ENCODE measurements at regions of chr6 and their contacts with region 1.

Region 1: DNA sequence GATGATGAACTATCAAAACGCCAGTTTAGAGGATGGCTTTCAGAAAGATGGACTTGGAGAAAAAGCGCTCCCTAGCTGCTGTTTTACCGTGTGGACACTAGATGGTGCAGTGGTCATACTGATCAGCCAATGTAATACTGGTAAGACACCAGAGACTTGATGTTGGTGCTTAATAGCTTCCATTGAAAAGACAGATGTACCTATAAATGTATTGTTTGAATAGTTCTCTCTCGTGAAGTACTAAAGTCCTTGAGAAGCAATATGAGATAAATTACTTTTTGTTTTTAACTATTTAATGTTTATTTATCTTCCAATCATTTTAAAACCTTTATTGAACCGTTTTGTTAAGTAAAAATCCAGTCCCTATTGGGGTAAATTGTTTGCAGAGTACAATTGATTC is 63.9 kb upstream of the FUCA2 start:
- DNase-seq: peak; percentile 61
- H3K4me3 ChIP-seq: no peak overlapping the region
- H3K27ac ChIP-seq: no peak overlapping the region
- H3K27me3 ChIP-seq: no peaks in the 10 kb centered on the region
- CTCF ChIP-seq: peak; percentile 91

Region 2: GRCh38 chr6:143647191-143647590 is 71.8 kb after region 1 on chr6:
- CTCF ChIA-PET with region 1: no interaction called
- POLR2A ChIA-PET with region 1: no interaction called
- DNase-seq: no peak
- H3K4me3 ChIP-seq: no peak overlapping the region
- H3K27ac ChIP-seq: no peak overlapping the region
- H3K27me3 ChIP-seq: no peaks in the 10 kb centered on the region
- CTCF ChIP-seq: no peak

Region 3: GRCh38 chr6:143806282-143807102 is 231.1 kb after region 1 on chr6:
- CTCF ChIA-PET with region 1: interaction called, 13 read pairs
- POLR2A ChIA-PET with region 1: no interaction called
- DNase-seq: peak; percentile 23
- H3K4me3 ChIP-seq: no peak overlapping the region
- H3K27ac ChIP-seq: no peak overlapping the region
- H3K27me3 ChIP-seq: no peaks in the 10 kb centered on the region
- CTCF ChIP-seq: no peak

Region 4: DNA sequence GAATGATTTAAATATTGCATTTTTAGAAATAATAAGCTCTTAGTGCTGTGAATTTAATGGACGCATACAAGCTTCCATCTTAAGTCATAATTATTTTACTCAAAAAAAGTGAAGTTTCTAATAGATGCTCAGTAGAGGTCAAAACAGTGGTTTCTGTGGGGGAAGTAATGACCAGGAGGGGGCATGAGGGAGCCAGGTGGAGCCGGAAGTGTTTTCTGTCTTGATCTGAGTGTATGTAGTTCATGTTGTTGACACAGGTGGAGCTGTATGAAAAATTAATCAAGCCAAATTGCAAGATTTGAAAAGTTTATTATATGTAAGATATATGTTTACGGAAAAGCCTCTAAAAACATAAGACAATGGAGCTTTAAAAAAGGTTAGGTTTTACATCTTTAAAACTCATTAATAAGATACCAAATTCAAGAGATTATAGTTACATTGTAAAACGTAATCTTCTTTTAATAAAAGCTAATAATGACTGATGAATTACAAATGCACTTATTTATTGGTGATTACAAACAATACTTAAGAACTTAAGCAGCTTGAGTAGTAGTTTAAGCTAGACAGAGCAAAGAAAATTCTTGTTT is 364.7 kb after region 1 on chr6:
- CTCF ChIA-PET with region 1: interaction called, 29 read pairs
- POLR2A ChIA-PET with region 1: no interaction called
- DNase-seq: no peak
- H3K4me3 ChIP-seq: no peak overlapping the region
- H3K27ac ChIP-seq: no peak overlapping the region
- H3K27me3 ChIP-seq: peaks cover 6% of the 10 kb centered on the region
- CTCF ChIP-seq: peak; percentile 69

Region 5: DNA sequence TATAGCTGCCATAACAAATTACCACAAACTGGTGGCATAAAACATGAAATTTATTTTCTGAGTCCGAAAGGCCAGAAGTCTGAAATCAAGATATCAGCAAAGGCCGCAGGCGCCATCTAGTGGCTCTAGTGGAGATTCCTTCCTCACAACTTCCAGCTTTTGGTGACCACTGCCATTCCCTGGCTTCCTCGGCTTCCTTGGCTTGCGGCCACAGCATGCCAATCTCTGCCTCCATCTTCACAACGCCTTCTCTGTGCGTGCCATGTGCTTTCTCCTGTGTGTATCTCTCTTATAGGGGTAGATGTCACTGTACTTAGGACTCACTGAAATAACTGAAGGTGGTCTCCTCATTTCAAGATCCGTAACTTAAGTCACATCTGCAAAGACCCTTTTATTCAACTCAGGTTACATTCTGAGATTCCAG is 438.1 kb after region 1 on chr6:
- CTCF ChIA-PET with region 1: interaction called, 111 read pairs
- POLR2A ChIA-PET with region 1: interaction called, 3 read pairs
- DNase-seq: peak; percentile 43
- H3K4me3 ChIP-seq: no peak overlapping the region
- H3K27ac ChIP-seq: no peak overlapping the region
- H3K27me3 ChIP-seq: no peaks in the 10 kb centered on the region
- CTCF ChIP-seq: peak; percentile 95